ENCODE measurements at regions of chr7 and their contacts with region 1.

Region 1: GRCh38 chr7:140479062-140479738 is at the start of gene MKRN1:
- DNase-seq: peak; percentile 98
- H3K4me3 Mint-ChIP-seq: peak within 1 kb of the TSS; percentile 99
- H3K27ac Mint-ChIP-seq: peak within 1 kb of the TSS; percentile 97
- H3K4me1 Mint-ChIP-seq: peaks cover 26% of the 10 kb centered on the region
- H3K27me3 Mint-ChIP-seq: peaks cover 13% of the 10 kb centered on the region
- total RNA-seq, gene MKRN1: 59.7 and 67.5 TPM in 2 replicates

Region 2: DNA sequence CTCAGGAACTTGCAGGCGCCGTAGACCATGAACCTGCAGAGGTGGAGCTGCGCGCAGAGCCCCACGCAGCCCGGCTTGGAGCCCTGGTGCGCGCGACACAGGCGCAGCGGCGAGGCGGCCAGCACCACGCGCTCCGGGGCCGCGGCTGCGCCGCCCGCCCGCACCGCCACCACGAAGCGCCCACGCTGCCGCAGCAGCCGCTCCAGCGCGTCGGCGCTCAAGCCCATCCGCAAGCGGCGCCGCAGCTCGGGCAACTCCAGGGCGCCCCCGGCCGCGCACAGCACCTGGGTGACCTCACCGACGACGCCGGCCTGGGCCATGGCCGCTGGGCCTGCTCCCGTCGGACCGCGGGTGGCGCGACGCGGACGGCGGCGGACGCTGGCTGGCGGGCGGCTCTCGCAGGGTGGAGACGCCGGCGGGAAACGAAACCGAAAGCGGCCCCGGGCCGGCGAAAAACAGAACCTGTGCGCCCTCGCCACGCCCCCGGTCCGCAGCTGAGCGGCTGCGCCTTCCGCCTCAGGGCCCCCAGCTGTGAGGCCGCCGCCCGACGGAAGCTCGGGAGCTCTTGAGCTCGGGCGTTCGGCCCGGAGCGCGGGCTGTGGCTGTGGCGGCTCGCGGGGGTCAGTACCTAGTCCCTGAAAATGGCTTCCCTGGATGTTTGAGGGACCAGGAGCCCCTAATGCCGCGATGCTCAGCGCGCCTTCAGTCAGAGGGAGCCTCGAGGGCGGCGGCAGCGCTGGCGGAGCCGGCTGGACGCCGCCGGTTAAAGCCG is 416.5 kb before region 1 on chr7 and contains the start of gene PARP12:
- intact Hi-C with region 1: loop called (anchors 1 kb)
- DNase-seq: peak; percentile 97
- H3K4me3 Mint-ChIP-seq: peak within 1 kb of the TSS; percentile 83
- H3K27ac Mint-ChIP-seq: peak within 1 kb of the TSS; percentile 94
- H3K4me1 Mint-ChIP-seq: peaks cover 48% of the 10 kb centered on the region
- H3K27me3 Mint-ChIP-seq: peaks cover 2% of the 10 kb centered on the region
- total RNA-seq, gene PARP12: 53.3 and 55.9 TPM in 2 replicates

Region 3: DNA sequence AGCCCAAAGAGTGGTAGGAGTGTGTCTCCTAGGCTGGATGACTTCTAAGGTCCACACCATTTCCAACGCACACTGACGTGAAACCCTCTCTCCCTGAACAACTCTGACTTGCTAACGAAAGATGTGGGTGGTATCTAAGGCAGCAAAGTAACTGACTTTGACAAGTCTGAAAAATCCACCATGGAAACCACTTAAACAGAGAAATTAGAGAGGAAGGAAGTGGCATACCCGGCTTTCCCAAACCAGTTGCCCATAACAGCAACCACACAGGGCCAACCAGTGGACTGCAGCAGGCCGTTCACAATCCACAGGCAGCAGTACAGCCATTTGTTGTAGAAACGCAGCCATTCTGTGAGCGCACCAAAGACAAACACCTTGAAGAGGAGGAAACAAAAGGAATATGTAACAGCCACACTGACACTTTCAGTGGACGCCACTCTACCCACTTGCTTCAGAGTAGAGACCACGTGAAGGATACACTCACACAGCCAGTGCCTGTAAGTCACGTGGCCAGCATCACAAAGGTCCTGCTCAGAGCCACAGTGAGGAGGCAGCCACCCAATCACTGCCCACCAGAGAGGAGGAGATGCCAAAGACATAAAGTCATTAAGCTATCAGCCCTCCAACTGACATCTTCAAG is 120.7 kb before region 1 on chr7:
- intact Hi-C with region 1: loop called (anchors 2 kb)
- DNase-seq: peak; percentile 71
- H3K4me3 Mint-ChIP-seq: peak overlapping the region; percentile 68
- H3K27ac Mint-ChIP-seq: peak overlapping the region; percentile 94
- H3K4me1 Mint-ChIP-seq: peaks cover 28% of the 10 kb centered on the region
- H3K27me3 Mint-ChIP-seq: no peaks in the 10 kb centered on the region

Region 4: DNA sequence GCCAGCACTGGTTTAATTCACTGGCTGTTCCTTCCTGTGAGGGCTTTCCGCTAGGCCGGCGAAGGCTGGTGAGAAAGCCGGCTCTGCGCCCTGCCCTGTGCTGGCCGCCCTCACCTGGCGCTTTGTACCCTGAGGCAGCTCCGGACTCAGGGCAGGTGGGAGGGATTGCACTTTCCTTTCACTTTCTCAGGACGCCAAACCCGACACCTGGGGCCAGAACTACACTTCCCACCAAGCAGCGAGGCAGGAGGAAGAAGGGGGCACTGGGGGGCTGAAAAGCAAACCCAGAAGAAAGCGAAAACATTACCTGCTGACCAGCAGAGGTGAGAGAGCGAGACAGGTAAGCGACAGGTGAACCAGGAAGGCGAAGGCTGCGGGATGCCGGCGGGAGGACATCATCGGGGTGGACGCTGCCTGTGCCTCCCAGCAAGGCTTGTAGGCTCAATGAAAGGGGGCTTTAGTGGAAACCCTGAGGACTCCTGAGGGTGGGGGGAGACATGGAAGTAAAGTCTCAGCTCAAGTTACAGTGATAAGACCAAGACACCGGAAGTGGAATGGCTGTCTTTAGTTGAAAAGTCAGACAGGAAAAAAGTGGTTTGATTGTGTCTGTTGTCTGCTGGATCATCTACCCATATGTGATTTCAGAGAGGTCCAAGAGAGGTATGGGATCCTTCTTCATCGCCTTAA is 75.2 kb before region 1 on chr7 and contains the start of gene RAB19:
- intact Hi-C with region 1: loop called (anchors 2 kb)
- DNase-seq: peak; percentile 88
- H3K4me3 Mint-ChIP-seq: peak within 1 kb of the TSS; percentile 90
- H3K27ac Mint-ChIP-seq: peak within 1 kb of the TSS; percentile 97
- H3K4me1 Mint-ChIP-seq: peaks cover 34% of the 10 kb centered on the region
- H3K27me3 Mint-ChIP-seq: no peaks in the 10 kb centered on the region
- total RNA-seq, gene RAB19: 23.0 and 24.4 TPM in 2 replicates

Region 5: DNA sequence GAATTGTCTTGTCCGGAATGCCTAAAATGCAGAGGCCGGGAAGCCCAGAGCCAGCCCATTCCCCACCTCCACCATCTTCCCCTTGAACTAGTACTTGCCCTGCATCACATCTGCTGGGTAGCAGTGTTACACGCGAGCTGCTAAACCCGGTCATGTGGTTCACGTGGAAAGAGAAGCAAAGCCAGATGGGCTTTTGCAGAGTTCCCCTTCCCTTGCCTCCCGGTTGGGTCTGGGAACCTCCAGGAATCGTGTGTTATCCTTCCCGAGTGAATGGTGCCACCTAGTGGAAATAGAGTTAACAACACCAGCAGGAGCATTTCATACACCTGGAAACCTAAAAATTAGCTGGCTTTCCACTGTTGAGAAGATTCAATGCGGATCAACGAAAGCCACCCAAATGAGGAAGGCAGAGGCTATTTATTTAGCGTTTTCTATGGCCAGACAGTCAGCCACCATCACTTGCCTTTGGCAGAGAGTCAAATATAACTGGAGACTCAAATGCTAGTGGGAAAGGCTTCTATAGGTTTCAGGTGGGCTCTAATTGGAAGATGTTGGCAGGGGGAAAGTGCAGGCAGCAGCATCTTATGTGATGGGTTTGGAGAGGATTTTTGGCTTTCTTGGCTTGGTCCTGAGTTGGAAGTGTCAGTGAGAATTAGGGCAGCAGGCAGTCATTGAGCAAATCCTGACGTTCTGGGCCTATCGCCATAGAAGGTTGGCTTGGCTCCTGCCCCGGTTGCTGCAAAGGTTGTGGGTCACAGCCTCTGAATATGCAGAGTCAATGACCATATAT is 174.3 kb after region 1 on chr7:
- intact Hi-C with region 1: loop called (anchors 2 kb)
- DNase-seq: peak; percentile 80
- H3K4me3 Mint-ChIP-seq: no peak overlapping the region
- H3K27ac Mint-ChIP-seq: no peak overlapping the region
- H3K4me1 Mint-ChIP-seq: peaks cover 19% of the 10 kb centered on the region
- H3K27me3 Mint-ChIP-seq: peaks cover 37% of the 10 kb centered on the region

Region 6: DNA sequence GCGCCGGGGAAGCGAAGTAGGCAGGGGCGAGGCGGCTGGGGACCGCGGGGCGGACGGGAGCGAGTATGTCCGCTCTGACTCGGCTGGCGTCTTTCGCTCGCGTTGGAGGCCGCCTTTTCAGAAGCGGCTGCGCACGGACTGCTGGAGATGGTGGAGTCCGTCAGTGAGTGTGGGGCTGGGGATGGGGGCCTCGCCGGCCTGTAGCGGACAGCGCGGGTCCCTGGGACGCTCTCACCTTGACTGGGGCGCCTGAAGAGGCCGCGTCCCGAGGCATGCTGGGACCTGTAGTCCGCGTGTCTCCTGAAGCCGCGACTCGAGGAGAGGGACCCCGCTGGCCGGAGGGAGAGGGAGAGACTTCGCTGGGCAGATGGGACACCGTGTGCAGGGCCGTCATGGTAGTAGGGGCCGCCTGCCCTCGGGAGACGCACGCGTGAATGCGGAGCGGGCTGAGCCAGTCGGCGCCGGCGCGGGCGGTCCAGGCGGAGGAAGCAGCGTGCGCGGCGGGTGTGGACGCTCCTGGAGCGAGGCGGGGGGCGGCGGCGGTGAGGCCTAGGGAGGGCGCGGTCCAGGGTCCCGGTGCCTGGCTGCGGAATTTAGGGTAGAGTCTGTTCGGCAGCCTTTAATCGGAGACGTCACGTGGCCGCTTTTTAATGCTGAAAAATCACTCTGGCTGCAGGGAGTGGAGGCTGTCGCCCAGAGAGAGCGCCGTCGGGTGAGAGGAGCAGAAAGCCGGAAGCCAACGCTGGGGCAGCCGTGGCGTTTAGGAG is 217.7 kb after region 1 on chr7 and contains the start of gene NDUFB2:
- intact Hi-C with region 1: loop called (anchors 1 kb)
- DNase-seq: peak; percentile 97
- H3K4me3 Mint-ChIP-seq: peak within 1 kb of the TSS; percentile 99
- H3K27ac Mint-ChIP-seq: peak within 1 kb of the TSS; percentile 99
- H3K4me1 Mint-ChIP-seq: peaks cover 27% of the 10 kb centered on the region
- H3K27me3 Mint-ChIP-seq: no peaks in the 10 kb centered on the region
- total RNA-seq, gene NDUFB2: 183 and 192 TPM in 2 replicates